ENCODE measurements at regions of chr12 and their contacts with region 1.

Region 1: GRCh38 chr12:7142056-7142644 is 12.0 kb downstream of the CLSTN3 start:
- DNase-seq: peak; percentile 52 to 61
- H3K4me3 ChIP-seq: no peak overlapping the region
- H3K27ac ChIP-seq: no peak overlapping the region
- H3K4me1 ChIP-seq: no peaks in the 10 kb centered on the region
- H3K27me3 ChIP-seq: no peaks in the 10 kb centered on the region
- CTCF ChIP-seq: peak; percentile 91

Region 2: GRCh38 chr12:7060353-7060954 is 81.7 kb before region 1 on chr12 and contains the start of gene C1S:
- CTCF ChIA-PET with region 1: no interaction called
- POLR2A ChIA-PET with region 1: no interaction called
- intact Hi-C with region 1: loop called (anchors 1 kb)
- DNase-seq: peak; percentile 68 to 69
- H3K4me3 ChIP-seq: no peak within 1 kb of the TSS
- H3K27ac ChIP-seq: no peak within 1 kb of the TSS
- H3K4me1 ChIP-seq: peaks cover 16% of the 10 kb centered on the region; the same call in 1 of the 2 replicates
- H3K27me3 ChIP-seq: peaks cover 2% of the 10 kb centered on the region; the same call in 1 of the 2 replicates
- CTCF ChIP-seq: peak; percentile 73
- total RNA-seq, gene C1S: 32.4 and 32.9 TPM in 2 replicates

Region 3: GRCh38 chr12:7155481-7156034 is 13.4 kb after region 1 on chr12:
- CTCF ChIA-PET with region 1: interaction called, 11 read pairs
- POLR2A ChIA-PET with region 1: interaction called, 3 read pairs
- intact Hi-C with region 1: no loop called
- DNase-seq: peak; percentile 85 to 86
- H3K4me3 ChIP-seq: no peak overlapping the region; the same call in 1 of the 2 replicates
- H3K27ac ChIP-seq: peak overlapping the region; percentile 50
- H3K4me1 ChIP-seq: peaks cover 35% of the 10 kb centered on the region
- H3K27me3 ChIP-seq: no peaks in the 10 kb centered on the region
- CTCF ChIP-seq: no peak